Activated B cell treated with CpG ODN at 0.5 μM for 24 hours (primary cell): ENCODE measurements at regions of chr12 and their contacts with region 1.

Region 1: GRCh38 chr12:94207849-94208621 is 59.7 kb downstream of the PLXNC1 start:
- DNase-seq: peak; percentile 39
- ATAC-seq: peak; percentile 81
- H3K4me3 Mint-ChIP-seq: peak overlapping the region; percentile 82
- H3K27ac Mint-ChIP-seq: peak overlapping the region; percentile 98
- H3K4me1 Mint-ChIP-seq: peaks cover 68% of the 10 kb centered on the region
- H3K27me3 Mint-ChIP-seq: no peaks in the 10 kb centered on the region
- CTCF ChIP-seq: no peak

Region 2: GRCh38 chr12:93434256-93434865 is 773.7 kb before region 1 on chr12:
- CTCF ChIA-PET with region 1: no interaction called
- POLR2A ChIA-PET with region 1: no interaction called
- intact Hi-C with region 1: no loop called
- DNase-seq: no peak
- ATAC-seq: no peak
- H3K4me3 Mint-ChIP-seq: peak overlapping the region; percentile 63
- H3K27ac Mint-ChIP-seq: peak overlapping the region; percentile 65
- H3K4me1 Mint-ChIP-seq: peaks cover 91% of the 10 kb centered on the region
- H3K27me3 Mint-ChIP-seq: no peaks in the 10 kb centered on the region
- CTCF ChIP-seq: no peak

Region 3: DNA sequence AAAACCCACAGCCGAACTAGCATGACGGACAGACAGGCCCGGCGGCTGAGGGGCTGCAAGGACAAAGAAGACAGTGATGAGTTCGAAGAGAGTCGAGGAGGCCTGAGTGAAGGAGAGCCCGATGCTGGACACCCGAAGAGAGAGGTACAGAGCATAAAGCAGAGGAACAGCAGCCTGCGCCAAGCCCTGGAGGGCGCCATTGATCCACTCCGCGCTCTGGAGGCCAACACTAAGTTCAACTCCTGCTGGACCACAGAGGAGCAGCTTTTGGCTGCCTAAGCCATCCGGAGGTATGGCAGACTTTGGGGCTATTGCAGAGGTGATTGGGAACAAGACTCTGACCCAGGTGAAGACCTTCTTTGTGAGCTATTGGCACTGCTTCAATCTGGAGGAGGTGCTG is 67.5 kb before region 1 on chr12:
- CTCF ChIA-PET with region 1: no interaction called
- POLR2A ChIA-PET with region 1: no interaction called
- intact Hi-C with region 1: no loop called
- DNase-seq: no peak
- ATAC-seq: peak; percentile 42
- H3K4me3 Mint-ChIP-seq: no peak overlapping the region
- H3K27ac Mint-ChIP-seq: no peak overlapping the region
- H3K4me1 Mint-ChIP-seq: peaks cover 2% of the 10 kb centered on the region
- H3K27me3 Mint-ChIP-seq: no peaks in the 10 kb centered on the region
- CTCF ChIP-seq: no peak

Region 4: DNA sequence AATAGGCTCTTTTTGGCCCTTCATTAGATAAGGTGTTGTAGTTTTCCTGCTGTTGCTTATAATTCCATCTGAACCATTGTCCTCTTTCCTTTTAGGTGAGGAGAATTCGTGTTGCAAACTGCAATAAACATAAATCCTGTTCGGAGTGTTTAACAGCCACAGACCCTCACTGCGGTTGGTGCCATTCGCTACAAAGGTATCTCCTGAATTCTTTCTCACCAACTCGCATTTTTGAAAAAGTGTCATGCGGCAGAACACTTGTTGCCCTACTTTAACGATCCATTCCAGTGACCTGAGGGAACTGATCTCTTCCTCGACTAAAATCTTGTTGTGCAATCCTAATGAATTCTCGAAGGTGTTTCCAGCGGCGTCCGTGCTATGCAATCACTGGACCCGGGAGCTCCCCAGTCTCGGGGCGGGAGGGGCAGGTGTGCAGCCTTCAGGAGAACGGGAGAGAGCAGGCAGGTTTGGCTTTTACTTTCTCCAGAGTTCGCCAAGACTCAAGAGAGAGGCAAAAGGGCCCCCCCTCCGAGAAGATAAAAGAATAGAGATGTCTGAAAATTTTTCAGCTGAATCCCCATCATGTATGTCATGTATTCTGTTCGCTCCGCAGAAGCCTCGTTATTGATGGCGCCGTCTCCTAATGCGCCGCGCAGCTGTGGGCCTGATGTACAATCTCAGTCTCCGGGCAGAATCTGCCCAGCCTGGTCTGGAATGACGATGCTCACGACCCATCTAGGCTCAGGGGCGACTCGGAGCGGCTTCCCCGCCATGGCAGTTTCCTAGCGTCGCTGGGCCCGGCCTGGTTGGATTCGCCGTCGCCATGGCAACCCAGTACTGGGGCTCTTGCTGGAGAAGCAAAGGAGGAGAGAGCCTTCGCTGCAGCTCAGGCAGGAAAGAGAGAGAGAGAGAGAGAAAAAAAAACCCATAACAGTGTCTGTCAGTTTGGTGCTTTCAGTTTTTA is 21.5 kb before region 1 on chr12:
- CTCF ChIA-PET with region 1: no interaction called
- POLR2A ChIA-PET with region 1: interaction called, 4 read pairs
- intact Hi-C with region 1: loop called (anchors 2 kb)
- DNase-seq: no peak
- ATAC-seq: no peak
- H3K4me3 Mint-ChIP-seq: no peak overlapping the region
- H3K27ac Mint-ChIP-seq: no peak overlapping the region
- H3K4me1 Mint-ChIP-seq: peaks cover 14% of the 10 kb centered on the region
- H3K27me3 Mint-ChIP-seq: no peaks in the 10 kb centered on the region
- CTCF ChIP-seq: no peak

Region 5: GRCh38 chr12:94244165-94245133 is 36.4 kb after region 1 on chr12:
- CTCF ChIA-PET with region 1: interaction called, 4 read pairs
- POLR2A ChIA-PET with region 1: interaction called, 17 read pairs
- intact Hi-C with region 1: loop called (anchors 1 kb)
- DNase-seq: peak; percentile 28
- ATAC-seq: peak; percentile 22
- H3K4me3 Mint-ChIP-seq: peak overlapping the region; percentile 13
- H3K27ac Mint-ChIP-seq: peak overlapping the region; percentile 72
- H3K4me1 Mint-ChIP-seq: peaks cover 66% of the 10 kb centered on the region
- H3K27me3 Mint-ChIP-seq: no peaks in the 10 kb centered on the region
- CTCF ChIP-seq: no peak

Region 6: GRCh38 chr12:94297876-94298505 is 90.0 kb after region 1 on chr12:
- CTCF ChIA-PET with region 1: no interaction called
- POLR2A ChIA-PET with region 1: interaction called, 7 read pairs
- intact Hi-C with region 1: loop called (anchors 1 kb)
- DNase-seq: no peak
- ATAC-seq: no peak
- H3K4me3 Mint-ChIP-seq: peak overlapping the region; percentile 42
- H3K27ac Mint-ChIP-seq: peak overlapping the region; percentile 79
- H3K4me1 Mint-ChIP-seq: peaks cover 56% of the 10 kb centered on the region
- H3K27me3 Mint-ChIP-seq: no peaks in the 10 kb centered on the region
- CTCF ChIP-seq: no peak

Region 7: GRCh38 chr12:94336211-94336925 is 128.3 kb after region 1 on chr12:
- CTCF ChIA-PET with region 1: no interaction called
- POLR2A ChIA-PET with region 1: no interaction called
- intact Hi-C with region 1: no loop called
- DNase-seq: no peak
- ATAC-seq: no peak
- H3K4me3 Mint-ChIP-seq: no peak overlapping the region
- H3K27ac Mint-ChIP-seq: no peak overlapping the region
- H3K4me1 Mint-ChIP-seq: peaks cover 4% of the 10 kb centered on the region
- H3K27me3 Mint-ChIP-seq: no peaks in the 10 kb centered on the region
- CTCF ChIP-seq: no peak

Region 8: DNA sequence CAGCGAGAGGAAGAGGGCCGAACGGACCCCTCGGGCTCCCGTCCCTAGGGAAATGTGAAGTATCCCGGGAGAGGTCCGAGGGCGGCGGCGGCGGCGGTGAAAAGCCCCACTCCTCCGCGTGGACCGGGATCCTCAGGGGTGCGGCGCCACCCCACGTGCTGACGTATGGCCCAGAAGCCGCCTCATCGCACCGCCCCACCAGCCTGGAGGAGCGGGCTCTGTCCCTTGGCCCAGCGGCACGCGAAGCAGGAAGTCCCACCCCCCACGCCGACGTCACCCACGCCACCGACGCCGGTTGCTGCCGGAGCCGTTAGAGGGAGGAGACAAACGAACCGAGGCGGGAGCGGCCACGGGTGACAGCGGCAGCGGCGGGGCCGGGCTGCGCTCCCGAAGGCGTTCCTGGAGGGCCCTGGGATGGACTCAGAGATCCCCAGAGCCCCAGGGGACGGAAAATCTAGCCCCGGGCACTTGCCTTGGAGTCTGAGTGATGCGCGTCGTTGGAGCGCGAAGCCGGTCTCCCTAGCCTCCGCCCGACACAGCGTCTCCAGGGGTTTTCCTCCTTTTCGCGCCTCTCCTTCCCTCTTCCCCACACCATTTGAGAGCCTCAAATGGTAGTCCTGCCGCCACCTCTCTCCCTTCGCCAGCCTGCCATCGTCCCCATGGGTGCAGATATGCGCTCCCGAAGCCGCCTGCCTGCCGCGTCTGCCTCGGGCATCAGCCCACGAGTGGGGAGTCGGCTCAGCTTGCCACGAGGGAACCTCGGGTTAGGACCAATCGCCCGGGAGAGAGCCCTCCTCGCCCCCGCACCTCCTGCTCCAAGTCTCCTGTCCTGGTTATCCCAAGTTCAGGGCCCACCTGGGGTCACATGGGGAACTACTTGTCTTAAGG is 251.9 kb after region 1 on chr12 and contains the start of gene CEP83:
- CTCF ChIA-PET with region 1: no interaction called
- POLR2A ChIA-PET with region 1: interaction called, 10 read pairs
- intact Hi-C with region 1: loop called (anchors 1 kb)
- DNase-seq: peak; percentile 94
- ATAC-seq: peak; percentile 96
- H3K4me3 Mint-ChIP-seq: peak within 1 kb of the TSS; percentile 91
- H3K27ac Mint-ChIP-seq: peak within 1 kb of the TSS; percentile 88
- H3K4me1 Mint-ChIP-seq: peaks cover 23% of the 10 kb centered on the region
- H3K27me3 Mint-ChIP-seq: no peaks in the 10 kb centered on the region
- CTCF ChIP-seq: no peak
- total RNA-seq, gene CEP83: 25.0 and 36.9 TPM in 2 replicates

Region 9: DNA sequence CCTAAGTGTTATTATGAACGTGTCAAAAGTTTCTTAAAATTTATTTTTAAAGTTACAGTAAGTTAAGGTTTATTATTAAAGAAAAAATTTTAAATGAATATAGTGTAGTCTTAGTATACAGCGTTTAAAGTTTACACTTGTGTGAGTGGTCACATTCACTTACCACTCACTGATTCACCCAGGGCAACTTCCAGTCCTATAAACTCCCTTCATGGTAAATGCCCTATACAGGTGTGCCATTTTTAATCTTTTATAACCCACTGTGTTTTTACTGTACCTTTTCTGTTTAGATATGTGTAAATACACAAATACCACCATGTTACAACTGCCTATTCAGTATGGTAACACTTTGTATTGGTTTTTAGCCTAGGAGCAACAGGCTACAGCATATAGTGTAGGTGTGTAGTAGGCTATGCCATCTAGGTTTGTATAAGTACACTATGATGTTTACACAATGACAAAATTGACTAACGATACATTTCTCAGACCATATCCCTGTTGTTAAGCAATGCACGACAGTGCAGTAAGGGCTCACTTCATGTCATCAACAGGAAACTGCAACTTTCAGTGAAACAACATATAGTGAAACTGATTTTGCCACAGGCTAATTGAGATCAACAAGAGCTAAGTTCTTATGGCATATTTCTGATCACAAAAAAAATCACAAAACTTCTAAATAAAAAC is 554.4 kb after region 1 on chr12:
- CTCF ChIA-PET with region 1: no interaction called
- POLR2A ChIA-PET with region 1: no interaction called
- intact Hi-C with region 1: loop called (anchors 10 kb)
- DNase-seq: no peak
- ATAC-seq: peak; percentile 45
- H3K4me3 Mint-ChIP-seq: no peak overlapping the region
- H3K27ac Mint-ChIP-seq: peak overlapping the region; percentile 43
- H3K4me1 Mint-ChIP-seq: peaks cover 49% of the 10 kb centered on the region
- H3K27me3 Mint-ChIP-seq: no peaks in the 10 kb centered on the region
- CTCF ChIP-seq: no peak